Heart right ventricle (tissue), 16 donors: ENCODE measurements at regions of chr13 and their contacts with region 1.

Region 1: GRCh38 chr13:99200432-99201167 is at the start of gene UBAC2:
- DNase-seq: peak; percentile 94 to 98
- ATAC-seq: peak; percentile 95 to 98 (median 97)
- H3K4me3 ChIP-seq: peak within 1 kb of the TSS; percentile 69 to 99 (median 90)
- H3K27ac ChIP-seq: peak within 1 kb of the TSS; percentile 79 to 99 (median 96)
- H3K4me1 ChIP-seq: peaks cover 7 to 49% (median 36%) of the 10 kb centered on the region in 9 donors
- H3K27me3 ChIP-seq: no peaks in the 10 kb centered on the region
- CTCF ChIP-seq: peak in 4 of 9 donors; percentile 16 to 29 (median 17)
- total RNA-seq, gene UBAC2: 31.8 to 60.4 (median 47.0) TPM

Region 2: DNA sequence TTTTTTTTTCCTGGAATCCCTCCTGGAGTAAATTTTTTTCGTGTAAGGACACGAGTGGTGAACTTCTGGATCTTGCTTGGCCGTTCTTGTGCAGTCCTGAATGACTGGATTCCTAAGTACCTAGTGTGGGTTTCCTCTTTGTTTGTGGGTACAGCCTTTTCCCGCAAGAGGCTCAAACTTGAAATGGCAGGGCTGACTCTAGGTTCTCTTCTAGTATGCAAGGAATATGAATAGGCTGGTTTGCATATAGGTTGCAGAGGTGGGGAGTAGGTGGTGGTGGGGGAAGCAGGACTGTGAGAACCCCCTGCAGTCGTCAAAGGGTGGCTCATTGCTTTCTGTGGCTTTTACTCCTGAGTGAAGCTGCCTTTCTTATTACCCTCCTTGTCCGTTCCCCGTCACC is 13.6 kb after region 1 on chr13:
- intact Hi-C with region 1: loop called in 1 of 10 experiments (anchors 2 kb)
- DNase-seq: no peak
- ATAC-seq: no peak
- H3K4me3 ChIP-seq: no peak overlapping the region
- H3K27ac ChIP-seq: peak overlapping the region in 4 of 10 donors; percentile 17 to 80 (median 50)
- H3K4me1 ChIP-seq: peaks cover 2 to 47% (median 39%) of the 10 kb centered on the region in 9 donors
- H3K27me3 ChIP-seq: no peaks in the 10 kb centered on the region
- CTCF ChIP-seq: no peak

Region 3: GRCh38 chr13:99225078-99225477 is 24.5 kb after region 1 on chr13:
- intact Hi-C with region 1: no loop called
- DNase-seq: no peak
- ATAC-seq: no peak
- H3K4me3 ChIP-seq: no peak overlapping the region
- H3K27ac ChIP-seq: peak overlapping the region in 1 of 10 donors; percentile 47
- H3K4me1 ChIP-seq: peaks cover 0 to 92% (median 63%) of the 10 kb centered on the region in 9 donors
- H3K27me3 ChIP-seq: no peaks in the 10 kb centered on the region
- CTCF ChIP-seq: no peak

Region 4: DNA sequence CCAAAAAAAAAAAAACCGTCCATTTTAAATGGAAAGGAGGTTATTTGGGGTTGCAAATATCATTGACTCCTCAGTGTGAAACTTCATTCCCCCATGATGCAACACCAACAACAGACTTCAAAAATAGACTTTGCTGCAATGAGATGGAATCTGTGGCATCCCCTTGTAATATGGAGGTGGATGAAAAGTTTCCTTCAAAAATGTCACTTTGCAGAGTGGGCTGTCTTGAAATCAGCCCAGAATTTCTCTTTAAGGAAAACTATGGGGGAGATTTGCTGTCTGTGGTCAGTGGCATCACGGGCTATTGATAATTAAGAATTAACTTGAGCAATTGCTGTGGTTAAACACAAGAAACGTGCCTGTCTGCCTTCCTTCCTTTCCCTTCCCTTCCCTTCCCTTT is 56.1 kb after region 1 on chr13:
- intact Hi-C with region 1: loop called in 2 of 10 experiments (anchors 2 to 5 kb)
- DNase-seq: no peak
- ATAC-seq: peak in 5 of 8 donors; percentile 67 to 83 (median 80)
- H3K4me3 ChIP-seq: peak overlapping the region in 1 of 10 donors; percentile 35
- H3K27ac ChIP-seq: peak overlapping the region in 5 of 10 donors; percentile 19 to 54 (median 33)
- H3K4me1 ChIP-seq: peaks cover 0 to 42% (median 4%) of the 10 kb centered on the region in 9 donors
- H3K27me3 ChIP-seq: no peaks in the 10 kb centered on the region
- CTCF ChIP-seq: no peak

Region 5: GRCh38 chr13:99264051-99264450 is 63.5 kb after region 1 on chr13:
- intact Hi-C with region 1: loop called in 3 of 10 experiments (anchors 5 kb)
- DNase-seq: no peak
- ATAC-seq: peak in 3 of 8 donors; percentile 29 to 43 (median 30)
- H3K4me3 ChIP-seq: no peak overlapping the region
- H3K27ac ChIP-seq: peak overlapping the region in 3 of 10 donors; percentile 7 to 42 (median 19)
- H3K4me1 ChIP-seq: peaks cover 0 to 24% (median 18%) of the 10 kb centered on the region in 9 donors
- H3K27me3 ChIP-seq: no peaks in the 10 kb centered on the region
- CTCF ChIP-seq: no peak

Region 6: GRCh38 chr13:99269627-99270241 is 69.1 kb after region 1 on chr13:
- intact Hi-C with region 1: loop called in 3 of 10 experiments (anchors 5 kb)
- DNase-seq: no peak
- ATAC-seq: peak in 7 of 8 donors; percentile 50 to 89 (median 72)
- H3K4me3 ChIP-seq: no peak overlapping the region
- H3K27ac ChIP-seq: peak overlapping the region in 1 of 10 donors; percentile 86
- H3K4me1 ChIP-seq: peaks cover 0 to 40% (median 4%) of the 10 kb centered on the region in 9 donors
- H3K27me3 ChIP-seq: no peaks in the 10 kb centered on the region
- CTCF ChIP-seq: peak; percentile 26 to 84 (median 65)